ENCODE measurements at regions of chr15 and their contacts with region 1.

Region 1: DNA sequence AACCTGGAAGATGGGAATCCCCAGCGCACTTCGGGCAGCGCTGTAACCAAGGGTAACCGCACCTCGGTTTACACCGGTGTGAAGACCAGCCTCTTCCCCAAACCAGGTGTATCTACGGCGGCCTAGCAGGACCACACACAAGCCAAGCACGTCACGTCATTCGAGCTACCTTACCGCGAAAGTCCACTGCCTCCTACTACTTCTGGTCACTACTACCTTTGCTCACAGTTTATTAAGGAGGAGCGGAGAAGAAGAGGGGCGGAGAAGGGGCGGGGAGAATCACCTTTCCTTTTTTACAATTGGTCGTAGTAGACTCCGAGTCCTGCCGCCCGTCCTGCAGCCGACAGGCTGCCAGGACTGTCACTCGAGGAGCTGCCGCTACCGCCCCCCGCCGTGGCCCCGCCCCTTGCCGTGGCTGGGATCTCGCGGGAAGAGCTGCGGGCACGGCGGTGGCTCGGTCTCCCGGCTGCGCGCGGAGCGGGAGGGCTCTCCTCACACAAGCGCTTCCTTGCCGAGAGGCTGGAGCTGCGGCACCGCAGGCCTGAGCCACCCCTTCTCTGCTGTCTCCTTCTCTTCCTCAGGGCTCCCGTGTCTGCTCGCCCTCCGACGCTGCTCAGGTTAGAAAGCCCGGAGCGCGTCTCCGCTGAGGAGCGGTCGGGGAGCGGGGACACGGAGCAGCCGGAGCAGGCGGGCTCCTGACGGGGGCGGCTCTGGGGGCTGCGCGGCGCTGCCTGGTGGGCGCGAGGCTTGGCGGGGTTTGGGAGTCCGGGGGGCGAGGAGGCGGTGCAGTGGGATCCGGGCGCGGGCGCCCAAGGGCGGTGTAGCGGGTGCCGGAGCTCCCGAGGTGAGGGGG is at the start of gene GLCE:
- DNase-seq: peak; percentile 96 to 98 (median 96)
- H3K4me3 ChIP-seq: peak within 1 kb of the TSS; percentile 43 to 98 (median 82)
- H3K27ac ChIP-seq: peak within 1 kb of the TSS; percentile 33 to 86 (median 75)
- H3K4me1 ChIP-seq: peaks cover 0 to 19% of the 10 kb centered on the region in 2 donors
- H3K27me3 ChIP-seq: no peaks in the 10 kb centered on the region
- CTCF ChIP-seq: no peak
- POLR2A ChIP-seq: peak; percentile 91 to 95
- total RNA-seq, gene GLCE: 20.5 to 48.4 (median 28.8) TPM

Region 2: DNA sequence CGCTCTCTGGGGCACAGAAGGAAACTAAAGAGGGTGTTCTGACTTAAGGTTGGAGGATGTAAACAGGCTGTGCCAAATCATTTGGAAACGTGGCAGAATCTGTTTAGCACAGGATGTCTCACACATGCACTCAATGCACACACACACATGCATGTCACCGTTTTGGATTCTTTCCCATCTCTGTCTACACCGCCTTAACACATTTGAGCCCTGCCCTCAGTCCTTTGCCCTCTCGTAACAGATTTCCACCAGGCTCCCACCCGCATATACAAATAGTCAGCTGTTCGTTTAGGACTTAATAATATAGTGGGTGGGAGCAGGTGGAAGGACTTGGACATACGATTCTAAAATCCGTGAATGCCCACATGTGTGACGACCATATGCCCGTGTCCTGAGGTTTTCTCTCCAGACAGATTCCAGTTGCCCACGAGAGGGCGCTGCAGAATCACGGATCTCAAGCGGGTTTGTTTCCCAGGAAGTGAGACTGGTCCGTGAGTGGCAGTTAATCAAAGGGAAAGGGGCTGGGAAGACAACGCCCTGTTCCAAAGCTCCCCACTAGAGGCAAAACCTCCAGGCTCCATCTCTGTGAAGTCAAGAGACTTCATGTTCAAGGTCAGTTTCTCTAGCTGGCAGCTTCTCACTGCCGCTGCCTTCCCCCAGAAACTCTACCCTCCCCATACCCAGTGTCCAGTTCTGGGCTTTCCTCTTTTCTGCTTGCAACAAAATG is 101.4 kb before region 1 on chr15:
- intact Hi-C with region 1: loop called in 1 of 2 experiments (anchors 5 kb)
- DNase-seq: peak; percentile 85 to 97 (median 92)
- H3K4me3 ChIP-seq: no peak overlapping the region
- H3K27ac ChIP-seq: no peak overlapping the region
- H3K4me1 ChIP-seq: peaks cover 0 to 8% of the 10 kb centered on the region in 2 donors
- H3K27me3 ChIP-seq: no peaks in the 10 kb centered on the region
- CTCF ChIP-seq: peak; percentile 83 to 98 (median 94)
- POLR2A ChIP-seq: no peak

Region 3: DNA sequence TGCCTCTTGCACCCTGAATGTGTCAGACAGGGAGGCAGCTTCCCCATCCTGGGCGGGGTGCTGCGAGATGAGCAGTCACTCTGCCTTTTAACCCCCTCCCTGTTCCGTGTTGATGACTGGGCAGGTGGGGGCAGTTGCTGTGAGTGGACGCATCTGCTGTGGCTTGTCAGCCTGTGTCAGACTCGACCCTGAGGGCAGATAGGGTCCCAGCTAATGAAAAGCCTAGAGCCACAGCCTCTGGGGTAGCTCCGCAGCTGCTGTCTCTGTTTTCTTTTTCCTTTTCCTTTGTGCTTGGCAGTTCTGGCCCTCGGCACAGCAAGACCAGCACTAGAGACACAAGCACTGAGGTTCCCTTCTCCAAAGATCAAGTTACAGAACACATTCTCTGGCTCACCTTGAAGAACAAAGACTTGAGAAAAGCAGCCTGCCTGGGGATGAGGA is 42.9 kb before region 1 on chr15:
- intact Hi-C with region 1: no loop called
- DNase-seq: no peak
- H3K4me3 ChIP-seq: no peak overlapping the region
- H3K27ac ChIP-seq: no peak overlapping the region
- H3K4me1 ChIP-seq: no peaks in the 10 kb centered on the region
- H3K27me3 ChIP-seq: no peaks in the 10 kb centered on the region
- CTCF ChIP-seq: no peak
- POLR2A ChIP-seq: no peak

Region 4: DNA sequence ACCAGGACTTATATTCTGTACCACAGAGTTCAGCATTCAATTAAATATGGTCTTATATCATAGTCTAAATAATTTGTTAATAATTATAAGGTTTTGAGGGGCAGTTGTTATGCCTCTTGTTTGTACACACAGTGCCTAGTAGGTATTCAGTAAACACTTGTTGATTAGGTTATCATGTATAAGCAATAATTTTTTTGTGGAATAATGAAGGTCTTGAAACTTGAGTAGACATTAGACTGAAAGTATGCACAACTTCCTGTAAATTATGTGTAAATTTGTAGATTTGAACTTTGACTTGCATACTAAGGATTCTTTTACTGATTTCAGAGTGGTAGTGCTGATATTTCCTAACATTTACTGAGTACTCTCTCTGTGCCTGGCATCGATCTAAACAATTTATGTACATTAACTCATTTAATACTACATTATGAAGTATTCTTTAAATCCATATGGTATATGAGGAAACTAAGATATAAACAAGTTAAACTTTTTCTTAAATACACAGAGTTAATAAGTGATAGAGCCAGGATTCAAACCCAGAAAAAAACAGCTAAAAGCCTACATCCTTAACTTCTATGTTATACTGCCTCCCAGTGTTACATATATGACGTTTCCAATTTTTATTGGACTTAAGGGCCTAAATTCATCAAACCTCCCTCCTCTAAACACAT is 65.1 kb after region 1 on chr15:
- intact Hi-C with region 1: loop called in 1 of 2 experiments (anchors 10 kb)
- DNase-seq: no peak
- H3K4me3 ChIP-seq: no peak overlapping the region
- H3K27ac ChIP-seq: no peak overlapping the region
- H3K4me1 ChIP-seq: no peaks in the 10 kb centered on the region
- H3K27me3 ChIP-seq: no peaks in the 10 kb centered on the region
- CTCF ChIP-seq: peak in 5 of 6 experiments; percentile 26 to 52 (median 40)
- POLR2A ChIP-seq: no peak

Region 5: DNA sequence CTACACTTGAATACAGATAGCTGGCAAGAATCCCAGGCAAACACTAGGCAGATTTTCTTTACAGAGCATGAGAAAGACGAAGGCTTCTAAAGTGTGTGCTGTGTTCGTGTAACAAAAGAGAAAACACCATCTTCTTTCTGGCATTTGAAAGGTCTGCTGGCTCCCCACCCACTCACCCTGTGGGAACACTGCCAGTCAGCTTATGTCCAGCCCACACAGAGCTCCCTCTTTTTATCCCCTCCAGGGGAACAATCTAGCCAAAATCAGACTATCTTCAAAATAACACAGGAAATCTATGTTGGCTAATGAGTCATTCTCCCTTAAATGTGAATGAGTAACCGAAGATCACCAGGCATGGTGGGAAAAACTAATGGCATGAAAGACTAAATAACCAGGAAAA is 92.8 kb after region 1 on chr15:
- intact Hi-C with region 1: loop called in 1 of 2 experiments (anchors 5 kb)
- DNase-seq: peak in 3 of 7 donors; percentile 18 to 57 (median 23)
- H3K4me3 ChIP-seq: no peak overlapping the region
- H3K27ac ChIP-seq: peak overlapping the region in 2 of 5 donors; percentile 46 to 51
- H3K4me1 ChIP-seq: peaks cover 4 to 10% of the 10 kb centered on the region in 2 donors
- H3K27me3 ChIP-seq: no peaks in the 10 kb centered on the region
- CTCF ChIP-seq: no peak
- POLR2A ChIP-seq: no peak

Region 6: DNA sequence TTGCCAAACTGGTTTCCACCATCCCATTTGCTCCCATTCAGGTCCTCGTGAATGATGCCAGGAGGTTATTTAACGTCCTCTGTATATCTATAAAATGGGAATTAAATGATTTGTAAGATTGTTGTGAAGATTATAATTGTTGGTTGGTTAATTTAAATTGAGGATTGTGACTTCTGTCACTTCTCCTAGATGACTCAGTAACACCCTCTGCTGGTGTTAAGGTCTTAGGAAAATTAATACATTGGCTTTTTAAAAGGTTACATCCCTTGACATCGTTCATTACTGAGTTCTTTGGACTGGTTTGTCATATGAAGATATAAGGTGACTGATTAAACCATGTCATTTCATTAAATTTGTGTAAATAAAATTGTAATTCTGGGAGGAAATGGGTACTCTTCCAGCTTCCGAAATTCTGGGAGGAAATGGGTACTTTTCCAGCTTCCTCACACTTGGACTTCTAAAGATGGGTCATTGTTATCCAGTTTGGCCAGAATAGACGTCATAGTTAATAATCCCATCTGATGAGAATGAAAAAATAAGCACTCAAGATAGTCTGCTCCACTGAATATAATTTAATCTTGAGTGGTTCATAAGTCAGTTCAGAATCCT is 105.1 kb after region 1 on chr15:
- intact Hi-C with region 1: loop called in 1 of 2 experiments (anchors 5 kb)
- DNase-seq: no peak
- H3K4me3 ChIP-seq: no peak overlapping the region
- H3K27ac ChIP-seq: no peak overlapping the region
- H3K4me1 ChIP-seq: no peaks in the 10 kb centered on the region
- H3K27me3 ChIP-seq: no peaks in the 10 kb centered on the region
- CTCF ChIP-seq: peak; percentile 34 to 71 (median 54)
- POLR2A ChIP-seq: no peak

Region 7: GRCh38 chr15:69394556-69395282 is 234.4 kb after region 1 on chr15:
- intact Hi-C with region 1: loop called in 1 of 2 experiments (anchors 10 kb)
- DNase-seq: peak; percentile 69 to 92 (median 85)
- H3K4me3 ChIP-seq: no peak overlapping the region
- H3K27ac ChIP-seq: peak overlapping the region in 1 of 5 donors; percentile 50
- H3K4me1 ChIP-seq: peaks cover 0 to 8% of the 10 kb centered on the region in 2 donors
- H3K27me3 ChIP-seq: no peaks in the 10 kb centered on the region
- CTCF ChIP-seq: peak; percentile 89 to 98 (median 93)
- POLR2A ChIP-seq: no peak